ENCODE measurements at regions of chr3 and their contacts with region 1.

Region 1: GRCh38 chr3:183260167-183260904 is 7.3 kb downstream of the B3GNT5 start:
- DNase-seq: no peak
- H3K4me3 ChIP-seq: no peak overlapping the region
- H3K27ac ChIP-seq: 0 out of 2 replicates have a peak overlapping the region, but pooled peaks have one; percentile 3
- H3K4me1 ChIP-seq: peaks cover 55% of the 10 kb centered on the region
- H3K27me3 ChIP-seq: no peaks in the 10 kb centered on the region
- CTCF ChIP-seq: no peak

Region 2: GRCh38 chr3:182937293-182938051 is 322.9 kb before region 1 on chr3:
- CTCF ChIA-PET with region 1: no interaction called
- POLR2A ChIA-PET with region 1: no interaction called
- intact Hi-C with region 1: no loop called
- DNase-seq: no peak
- H3K4me3 ChIP-seq: no peak overlapping the region
- H3K27ac ChIP-seq: no peak overlapping the region
- H3K4me1 ChIP-seq: no peaks in the 10 kb centered on the region
- H3K27me3 ChIP-seq: no peaks in the 10 kb centered on the region
- CTCF ChIP-seq: no peak

Region 3: DNA sequence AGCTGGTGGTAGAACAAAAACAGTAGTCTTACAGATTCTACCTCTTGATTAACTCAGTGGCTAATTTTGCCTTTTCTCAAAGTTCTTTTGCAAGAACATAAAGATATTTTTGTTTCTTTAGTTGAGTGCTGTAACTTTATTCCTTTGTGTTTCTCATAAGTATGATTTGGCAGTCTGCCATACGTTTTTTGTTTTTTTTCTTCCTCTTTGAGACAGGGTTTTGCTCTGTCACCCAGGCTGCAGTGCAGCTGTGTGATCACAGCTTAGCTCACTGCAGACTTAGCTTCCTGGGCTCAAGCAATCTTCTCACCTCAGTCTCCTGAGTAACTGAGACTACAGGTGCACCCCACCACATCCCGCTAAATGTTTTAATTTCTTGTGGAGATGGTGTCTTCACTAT is 15.1 kb after region 1 on chr3:
- CTCF ChIA-PET with region 1: interaction called, 5 read pairs
- POLR2A ChIA-PET with region 1: interaction called, 15 read pairs
- intact Hi-C with region 1: no loop called
- DNase-seq: peak; percentile 48 to 82
- H3K4me3 ChIP-seq: peak overlapping the region; percentile 7; the same call in 1 of the 2 replicates
- H3K27ac ChIP-seq: peak overlapping the region; percentile 87
- H3K4me1 ChIP-seq: peaks cover 64% of the 10 kb centered on the region
- H3K27me3 ChIP-seq: no peaks in the 10 kb centered on the region
- CTCF ChIP-seq: no peak

Measured in PC-9 (cell line).